Transverse colon (tissue), 4 donors: ENCODE measurements at regions of chr1 and their contacts with region 1.

Region 1: DNA sequence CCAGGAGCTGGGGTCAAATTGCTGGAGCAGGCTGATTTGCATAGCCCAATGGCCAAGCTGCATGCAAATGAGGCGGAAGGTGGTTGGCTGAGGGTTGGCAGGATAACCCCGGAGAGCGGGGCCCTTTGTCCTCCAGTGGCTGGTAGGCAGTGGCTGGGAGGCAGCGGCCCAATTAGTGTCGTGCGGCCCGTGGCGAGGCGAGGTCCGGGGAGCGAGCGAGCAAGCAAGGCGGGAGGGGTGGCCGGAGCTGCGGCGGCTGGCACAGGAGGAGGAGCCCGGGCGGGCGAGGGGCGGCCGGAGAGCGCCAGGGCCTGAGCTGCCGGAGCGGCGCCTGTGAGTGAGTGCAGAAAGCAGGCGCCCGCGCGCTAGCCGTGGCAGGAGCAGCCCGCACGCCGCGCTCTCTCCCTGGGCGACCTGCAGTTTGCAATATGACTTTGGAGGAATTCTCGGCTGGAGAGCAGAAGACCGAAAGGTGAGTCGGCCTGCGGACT is at the start of gene GADD45A:
- DNase-seq: peak; percentile 99
- H3K4me3 ChIP-seq: peak within 1 kb of the TSS; percentile 80 to 92 (median 89)
- H3K27ac ChIP-seq: peak within 1 kb of the TSS; percentile 96 to 98 (median 98)
- H3K4me1 ChIP-seq: peaks cover 8 to 34% (median 28%) of the 10 kb centered on the region in 4 donors
- H3K27me3 ChIP-seq: no peaks in the 10 kb centered on the region
- CTCF ChIP-seq: no peak
- EP300 ChIP-seq: no peak
- POLR2A ChIP-seq: peak; percentile 99
- total RNA-seq, gene GADD45A: 2.0 to 79.7 (median 69.9) TPM

Region 2: DNA sequence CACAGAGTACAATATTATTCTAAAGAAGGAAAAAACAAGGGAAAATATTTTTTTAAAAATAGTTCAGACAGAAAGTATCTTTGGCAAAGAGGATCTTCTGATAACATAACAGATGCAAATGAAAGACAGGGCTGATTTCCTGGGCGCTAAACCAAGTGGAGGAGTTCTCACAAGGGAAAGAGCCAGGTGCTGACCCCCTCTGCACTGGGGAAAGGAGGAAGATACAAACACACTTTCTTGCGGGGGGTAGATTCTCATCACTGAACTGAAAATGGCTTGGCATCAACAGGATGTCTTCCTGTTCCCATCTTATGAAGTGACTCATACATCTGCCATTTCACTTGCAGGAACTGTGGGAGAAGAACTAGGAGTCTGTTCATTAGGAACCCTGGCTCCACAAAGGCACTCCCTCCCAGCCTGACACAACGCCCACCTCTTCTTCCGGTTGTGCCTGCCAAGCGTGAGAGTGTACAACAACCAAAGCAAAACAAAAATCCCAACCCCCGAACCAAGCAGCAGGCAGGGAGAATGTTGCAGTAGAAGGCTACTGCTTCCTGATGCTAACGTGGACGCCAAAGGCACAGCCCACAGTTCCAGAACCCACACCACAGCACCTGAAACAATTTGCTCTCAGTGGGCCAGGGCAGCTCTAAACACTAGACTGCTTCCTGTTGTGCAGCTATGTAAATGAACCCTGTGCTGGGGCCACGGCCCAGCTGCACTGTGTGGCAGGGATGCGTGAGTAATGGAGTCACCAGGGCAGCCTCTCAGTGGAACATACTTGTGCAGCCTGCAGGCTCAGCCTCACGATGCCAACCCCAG is 50.9 kb after region 1 on chr1:
- in situ Hi-C with region 1: loop called in 1 of 4 experiments (anchors 10 kb)
- intact Hi-C with region 1: no loop called
- DNase-seq: peak; percentile 78
- H3K4me3 ChIP-seq: peak overlapping the region in 1 of 4 donors; percentile 20
- H3K27ac ChIP-seq: peak overlapping the region; percentile 77 to 83 (median 78)
- H3K4me1 ChIP-seq: peaks cover 19 to 71% (median 26%) of the 10 kb centered on the region in 4 donors
- H3K27me3 ChIP-seq: no peaks in the 10 kb centered on the region
- CTCF ChIP-seq: no peak
- EP300 ChIP-seq: no peak
- POLR2A ChIP-seq: peak; percentile 52

Region 3: DNA sequence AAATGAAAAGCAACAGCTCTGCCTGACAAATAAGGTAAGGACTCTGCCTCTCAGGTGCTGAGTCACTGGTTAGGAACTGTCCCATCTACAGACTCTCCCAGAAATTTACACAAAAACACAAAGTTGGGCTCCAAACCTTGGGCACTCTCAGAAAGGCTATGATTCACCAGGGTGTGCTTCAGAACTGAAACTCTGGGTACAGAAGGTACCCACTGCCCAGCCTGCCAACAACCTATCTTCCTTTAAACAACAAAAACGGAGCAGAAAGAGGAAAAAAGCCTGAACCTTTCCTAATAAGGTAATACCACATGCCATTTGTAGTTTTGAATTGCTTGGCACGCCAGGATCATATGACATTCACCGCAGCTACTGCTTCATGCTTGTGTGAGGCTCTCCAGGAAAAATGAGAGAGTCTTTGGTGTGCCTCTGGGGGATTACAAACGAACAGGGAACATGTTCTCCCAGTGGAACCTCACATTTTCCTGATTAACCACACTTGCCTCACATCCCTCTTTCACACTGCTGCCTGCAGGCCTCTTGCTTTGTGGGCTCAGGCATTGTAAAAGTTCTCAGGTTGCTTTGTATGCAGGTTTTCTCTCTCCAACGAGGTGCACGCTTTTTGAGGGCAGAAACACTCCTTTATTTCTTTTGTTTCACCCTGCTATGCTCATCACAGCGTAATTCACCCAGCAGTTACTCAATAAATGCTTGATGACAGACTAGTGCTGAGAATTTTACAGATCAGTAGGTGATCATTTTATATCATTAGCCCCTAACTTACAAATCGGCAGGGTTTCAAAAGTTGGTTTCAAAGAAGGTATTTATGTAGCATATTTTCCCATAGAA is 65.0 kb after region 1 on chr1:
- in situ Hi-C with region 1: loop called in 1 of 4 experiments (anchors 10 kb)
- intact Hi-C with region 1: no loop called
- DNase-seq: no peak
- H3K4me3 ChIP-seq: no peak overlapping the region
- H3K27ac ChIP-seq: peak overlapping the region; percentile 79 to 84 (median 82)
- H3K4me1 ChIP-seq: peaks cover 31 to 55% (median 39%) of the 10 kb centered on the region in 4 donors
- H3K27me3 ChIP-seq: no peaks in the 10 kb centered on the region
- CTCF ChIP-seq: no peak
- EP300 ChIP-seq: no peak
- POLR2A ChIP-seq: no peak

Region 4: DNA sequence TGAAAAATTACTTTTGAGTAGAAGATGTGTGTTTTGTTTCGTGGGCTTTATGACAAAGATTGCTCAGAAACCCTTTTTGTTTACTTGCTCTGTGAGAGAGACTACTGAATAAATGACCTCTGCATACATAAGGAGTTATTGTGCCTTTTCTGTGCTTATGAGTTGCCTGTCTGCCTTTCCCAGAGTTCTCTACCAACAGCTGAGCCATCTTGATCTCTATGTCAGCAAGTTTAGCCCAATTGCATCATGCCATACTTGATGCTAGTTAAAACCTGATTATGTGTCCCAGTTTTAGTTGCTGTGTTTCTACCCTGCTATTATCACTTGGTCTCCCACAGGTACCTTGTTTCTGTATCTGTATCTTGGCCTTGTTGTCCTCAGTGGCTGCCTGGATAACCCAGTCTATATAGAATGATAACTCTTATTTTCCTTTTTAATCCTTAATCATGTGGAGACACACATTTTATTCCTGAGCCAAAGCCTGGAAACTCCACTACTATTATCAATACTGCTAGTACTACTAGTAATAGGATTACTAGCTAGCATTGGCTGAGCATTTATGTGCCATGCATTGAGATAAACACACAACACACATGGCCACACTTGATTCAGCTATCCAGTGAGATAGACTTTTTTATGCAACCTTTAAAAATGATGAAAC is 176.9 kb after region 1 on chr1:
- in situ Hi-C with region 1: no loop called
- intact Hi-C with region 1: no loop called
- DNase-seq: no peak
- H3K4me3 ChIP-seq: no peak overlapping the region
- H3K27ac ChIP-seq: no peak overlapping the region
- H3K4me1 ChIP-seq: no peaks in the 10 kb centered on the region
- H3K27me3 ChIP-seq: no peaks in the 10 kb centered on the region
- CTCF ChIP-seq: no peak
- EP300 ChIP-seq: no peak
- POLR2A ChIP-seq: no peak